ENCODE measurements at regions of chr5 and their contacts with region 1.

Region 1: GRCh38 chr5:91016954-91017700 is 366.0 kb downstream of the ARRDC3 start:
- DNase-seq: no peak
- H3K4me3 ChIP-seq: no peak overlapping the region
- H3K27ac ChIP-seq: no peak overlapping the region
- H3K4me1 ChIP-seq: no peaks in the 10 kb centered on the region
- H3K27me3 ChIP-seq: no peaks in the 10 kb centered on the region
- CTCF ChIP-seq: no peak
- POLR2A ChIP-seq: no peak

Region 2: DNA sequence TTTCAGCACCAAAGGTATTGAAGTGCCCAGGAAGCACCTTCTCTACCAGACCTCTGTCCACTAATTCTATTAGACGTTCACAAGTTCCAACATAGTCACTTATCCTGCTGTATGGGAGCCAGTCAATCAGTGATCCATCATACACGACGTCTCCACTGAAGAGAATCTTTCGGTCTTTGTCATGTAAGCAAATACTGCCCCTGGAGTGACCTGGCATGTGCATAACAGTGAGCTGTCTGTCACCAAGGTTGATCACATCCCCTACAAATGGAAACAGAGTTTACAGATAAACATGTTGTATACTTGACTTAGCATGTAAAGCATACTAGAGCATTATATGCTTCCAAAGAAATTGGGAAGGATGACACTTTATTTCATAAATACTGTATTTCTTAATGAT is 555.8 kb before region 1 on chr5:
- intact Hi-C with region 1: no loop called
- DNase-seq: no peak
- H3K4me3 ChIP-seq: no peak overlapping the region
- H3K27ac ChIP-seq: no peak overlapping the region
- H3K4me1 ChIP-seq: no peaks in the 10 kb centered on the region
- H3K27me3 ChIP-seq: no peaks in the 10 kb centered on the region
- CTCF ChIP-seq: no peak
- POLR2A ChIP-seq: no peak

Region 3: DNA sequence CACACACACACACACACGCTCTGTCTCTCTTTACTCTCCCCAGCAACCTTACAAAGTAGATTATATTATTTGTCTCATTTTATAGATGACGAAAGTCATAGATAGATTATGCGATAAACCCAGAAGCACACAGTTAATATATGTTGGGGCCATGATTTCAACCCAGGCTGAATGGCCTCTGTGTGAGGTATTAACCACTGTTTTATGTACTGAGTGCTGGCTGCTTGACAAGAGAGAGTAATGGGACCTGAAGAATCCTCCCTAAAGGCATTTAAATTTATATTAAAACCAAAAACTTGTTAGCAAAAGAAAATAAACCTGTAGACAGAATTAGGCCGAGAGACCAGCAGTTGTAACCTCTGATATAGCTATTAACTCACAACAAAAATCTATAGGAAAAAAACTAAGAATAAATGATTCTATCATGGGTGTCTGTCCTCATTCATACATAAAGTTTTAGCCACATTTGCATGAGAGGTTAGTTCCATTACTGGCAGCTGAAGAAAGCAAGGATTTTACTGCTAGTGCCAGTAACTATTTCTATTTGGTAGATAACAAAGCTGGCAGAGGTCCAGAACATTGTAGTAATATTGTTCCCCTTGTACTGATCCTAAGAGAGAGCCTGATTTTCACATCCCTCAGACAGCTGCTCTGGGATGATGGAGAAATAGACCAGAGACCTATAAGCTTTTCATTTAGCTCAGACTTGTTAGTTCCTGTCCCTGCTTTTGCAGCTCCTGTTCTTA is 207.6 kb before region 1 on chr5:
- intact Hi-C with region 1: no loop called
- DNase-seq: no peak
- H3K4me3 ChIP-seq: no peak overlapping the region
- H3K27ac ChIP-seq: no peak overlapping the region
- H3K4me1 ChIP-seq: no peaks in the 10 kb centered on the region
- H3K27me3 ChIP-seq: no peaks in the 10 kb centered on the region
- CTCF ChIP-seq: no peak
- POLR2A ChIP-seq: no peak

Region 4: GRCh38 chr5:90940227-90940995 is 76.7 kb before region 1 on chr5:
- intact Hi-C with region 1: loop called (anchors 10 kb)
- DNase-seq: no peak
- H3K4me3 ChIP-seq: no peak overlapping the region
- H3K27ac ChIP-seq: peak overlapping the region in 1 of 2 donors; percentile 32
- H3K4me1 ChIP-seq: no peaks in the 10 kb centered on the region
- H3K27me3 ChIP-seq: no peaks in the 10 kb centered on the region
- CTCF ChIP-seq: no peak
- POLR2A ChIP-seq: no peak

Region 5: DNA sequence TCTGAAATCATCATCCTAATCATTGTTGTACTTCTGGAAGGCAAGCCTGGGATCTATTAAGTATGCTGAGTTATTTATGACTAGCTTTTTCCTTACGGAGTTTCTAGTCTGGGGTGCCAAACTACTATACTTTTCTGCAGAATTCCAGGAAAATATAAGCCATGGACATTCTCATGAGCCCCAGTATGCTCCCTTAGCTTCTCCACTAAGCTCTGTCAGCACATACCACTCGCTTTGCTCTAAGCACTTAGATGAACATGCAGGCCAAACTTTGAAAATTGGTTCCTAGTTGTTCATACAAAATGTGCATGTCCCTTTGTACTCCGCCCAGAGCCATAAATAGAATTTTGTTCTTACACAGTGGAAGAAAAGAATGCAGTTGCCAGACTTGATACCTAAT is 81.4 kb after region 1 on chr5:
- intact Hi-C with region 1: no loop called
- DNase-seq: no peak
- H3K4me3 ChIP-seq: no peak overlapping the region
- H3K27ac ChIP-seq: no peak overlapping the region
- H3K4me1 ChIP-seq: no peaks in the 10 kb centered on the region
- H3K27me3 ChIP-seq: no peaks in the 10 kb centered on the region
- CTCF ChIP-seq: no peak
- POLR2A ChIP-seq: no peak

Region 6: DNA sequence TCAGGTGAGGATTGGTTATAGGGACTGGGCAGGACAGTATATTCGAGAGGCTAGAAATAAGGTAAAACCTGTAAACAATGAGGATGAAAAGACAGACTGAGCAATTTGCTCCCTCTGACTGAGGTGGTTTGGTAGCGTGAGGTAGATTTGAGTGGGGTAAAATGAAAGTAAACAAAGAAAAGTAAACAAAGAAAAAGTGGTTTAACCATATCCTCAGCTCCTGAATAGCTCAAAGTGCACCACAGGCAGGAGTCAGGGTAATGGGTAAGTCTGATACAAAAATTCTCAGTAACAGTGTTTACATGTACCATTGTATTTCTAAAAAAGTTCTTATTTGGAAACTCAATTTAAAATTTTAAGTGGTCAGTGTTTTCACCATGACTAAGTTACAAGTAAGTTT is 569.1 kb after region 1 on chr5:
- intact Hi-C with region 1: no loop called
- DNase-seq: no peak
- H3K4me3 ChIP-seq: no peak overlapping the region
- H3K27ac ChIP-seq: no peak overlapping the region
- H3K4me1 ChIP-seq: no peaks in the 10 kb centered on the region
- H3K27me3 ChIP-seq: no peaks in the 10 kb centered on the region
- CTCF ChIP-seq: no peak
- POLR2A ChIP-seq: no peak